Astrocyte of the cerebellum (primary cell): ENCODE measurements at regions of chr1 and their contacts with region 1.

Region 1: DNA sequence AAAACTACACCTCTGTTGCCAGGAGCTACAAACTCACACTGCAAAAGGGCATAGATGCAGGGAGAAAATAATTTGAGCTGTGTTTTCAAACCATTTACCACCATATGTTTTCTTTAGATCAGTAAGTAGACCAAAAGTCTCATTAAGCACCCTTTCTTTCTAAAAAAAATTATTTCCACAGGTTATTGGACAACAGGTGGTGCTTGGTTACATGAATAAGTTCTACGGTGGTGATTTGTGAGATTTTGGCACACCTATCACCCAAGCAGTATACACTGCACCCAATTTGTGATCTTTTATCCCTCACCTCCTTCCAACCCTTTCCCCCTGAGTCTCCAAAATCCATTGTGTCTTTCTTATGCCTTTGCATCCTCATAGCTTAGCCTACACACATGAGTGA is 21.1 kb downstream of the MAP10 start:
- DNase-seq: no peak
- H3K4me3 ChIP-seq: no peak overlapping the region
- CTCF ChIP-seq: no peak

Region 2: DNA sequence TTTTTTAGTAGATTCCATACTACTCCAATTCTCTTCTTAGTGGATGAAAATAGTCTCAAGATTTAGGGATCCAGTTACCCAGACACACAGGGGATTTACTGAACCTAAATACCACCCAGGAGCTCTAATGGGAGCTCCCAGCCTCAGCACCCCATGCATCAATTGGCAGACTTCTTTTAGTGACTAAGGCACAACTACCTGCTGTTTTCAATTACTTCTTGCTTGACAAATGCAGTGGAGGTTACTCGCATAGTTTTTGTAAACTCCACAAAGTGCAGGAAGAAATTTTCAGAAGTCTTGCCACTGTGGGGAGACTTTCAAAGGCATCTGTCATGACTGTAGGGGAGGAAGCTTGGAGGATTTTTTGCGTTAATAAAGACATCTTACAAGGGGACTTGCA is 56.6 kb before region 1 on chr1:
- in situ Hi-C with region 1: loop called (anchors 5 kb)
- DNase-seq: no peak
- H3K4me3 ChIP-seq: no peak overlapping the region
- CTCF ChIP-seq: no peak